Pancreas (tissue), 10 donors: ENCODE measurements at regions of chr5 and their contacts with region 1.

Region 1: GRCh38 chr5:179795863-179796833 is 2.4 kb downstream of the LTC4S start:
- DNase-seq: peak; percentile 81 to 93 (median 88)
- ATAC-seq: peak; percentile 83 to 87 (median 86)
- H3K4me3 ChIP-seq: peak overlapping the region; percentile 69 to 86 (median 78)
- H3K27ac ChIP-seq: peak overlapping the region; percentile 84 to 91 (median 90)
- H3K4me1 ChIP-seq: peaks cover 5 to 12% (median 6%) of the 10 kb centered on the region in 3 donors
- H3K27me3 ChIP-seq: no peaks in the 10 kb centered on the region
- CTCF ChIP-seq: peak; percentile 63 to 79 (median 74)

Region 2: DNA sequence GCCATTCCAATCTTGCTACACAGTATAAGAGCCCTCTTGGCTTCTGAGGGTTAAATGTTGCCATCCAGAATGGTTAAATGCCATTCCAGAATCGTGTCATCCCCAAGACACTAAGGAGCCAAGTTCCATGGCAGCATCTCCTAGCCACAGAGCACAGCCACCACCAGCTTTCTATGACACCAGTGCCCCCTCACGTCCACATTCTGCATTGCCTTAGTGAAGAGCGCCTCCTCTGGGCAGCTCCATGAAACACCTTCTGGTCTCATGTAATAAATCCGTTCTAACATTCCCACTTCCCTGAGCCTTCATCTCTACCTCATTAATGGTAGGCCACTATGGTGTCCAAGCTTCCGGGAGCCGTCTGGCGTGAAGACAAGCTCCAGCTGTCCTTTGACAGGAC is 127.8 kb before region 1 on chr5:
- intact Hi-C with region 1: loop called in 1 of 3 experiments (anchors 10 kb)
- DNase-seq: peak in 2 of 6 donors; percentile 51 to 57
- ATAC-seq: peak in 3 of 4 donors; percentile 70 to 90 (median 77)
- H3K4me3 ChIP-seq: no peak overlapping the region
- H3K27ac ChIP-seq: no peak overlapping the region
- H3K4me1 ChIP-seq: no peaks in the 10 kb centered on the region
- H3K27me3 ChIP-seq: no peaks in the 10 kb centered on the region
- CTCF ChIP-seq: peak in 3 of 4 donors; percentile 15 to 30 (median 28)